ENCODE measurements at regions of chr7 and their contacts with region 1.

Region 1: GRCh38 chr7:47266131-47266706 is 315.7 kb downstream of the TNS3 start:
- DNase-seq: peak; percentile 78
- H3K4me3 Mint-ChIP-seq: no peak overlapping the region
- H3K27ac Mint-ChIP-seq: no peak overlapping the region
- H3K4me1 Mint-ChIP-seq: no peaks in the 10 kb centered on the region
- H3K27me3 Mint-ChIP-seq: no peaks in the 10 kb centered on the region

Region 2: DNA sequence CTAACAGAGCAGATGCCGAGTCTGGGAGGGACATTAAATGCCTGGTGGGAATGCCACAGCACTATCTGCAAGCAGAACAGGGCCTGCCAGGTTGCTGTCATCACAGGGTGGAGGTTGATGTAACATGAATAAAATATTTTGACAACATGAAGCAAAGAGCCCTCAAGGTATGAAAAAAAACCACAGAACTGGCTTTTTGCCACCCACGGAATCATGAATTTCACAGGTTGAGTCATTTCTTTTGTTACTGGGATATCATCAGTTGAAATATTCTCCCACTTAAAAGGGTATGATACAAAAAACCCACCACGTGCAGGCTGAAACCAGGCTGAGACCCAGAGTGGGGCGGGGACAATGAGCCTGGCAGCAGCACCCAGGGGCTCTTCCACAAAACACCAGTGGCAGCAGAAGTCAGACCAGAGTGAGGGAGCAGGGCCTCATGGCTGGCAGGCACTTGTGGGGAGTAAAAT is 95.6 kb after region 1 on chr7:
- intact Hi-C with region 1: loop called (anchors 5 kb)
- DNase-seq: peak; percentile 54
- H3K4me3 Mint-ChIP-seq: no peak overlapping the region
- H3K27ac Mint-ChIP-seq: peak overlapping the region; percentile 61
- H3K4me1 Mint-ChIP-seq: peaks cover 6% of the 10 kb centered on the region
- H3K27me3 Mint-ChIP-seq: no peaks in the 10 kb centered on the region

Region 3: DNA sequence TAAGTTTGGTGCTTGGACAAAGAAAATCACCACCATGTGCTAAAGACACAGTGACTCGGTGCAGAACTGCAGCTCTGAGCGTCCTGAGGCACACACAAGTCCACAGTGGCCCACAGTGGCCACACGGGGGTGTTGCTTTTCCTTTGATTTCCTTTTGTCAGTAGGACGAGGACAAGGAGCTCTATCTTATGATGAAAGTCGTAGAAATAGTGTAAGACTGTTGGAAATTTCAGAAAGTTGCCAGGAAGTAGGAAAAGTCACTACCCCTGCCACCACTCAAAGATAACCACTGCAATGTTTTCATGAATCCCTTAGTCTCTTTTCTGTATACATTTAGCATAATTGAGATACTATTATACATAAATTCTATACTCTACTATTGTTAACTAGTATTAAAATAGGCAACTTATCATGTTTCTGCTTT is 169.7 kb after region 1 on chr7:
- intact Hi-C with region 1: loop called (anchors 10 kb)
- DNase-seq: no peak
- H3K4me3 Mint-ChIP-seq: no peak overlapping the region
- H3K27ac Mint-ChIP-seq: no peak overlapping the region
- H3K4me1 Mint-ChIP-seq: peaks cover 2% of the 10 kb centered on the region
- H3K27me3 Mint-ChIP-seq: no peaks in the 10 kb centered on the region

Region 4: DNA sequence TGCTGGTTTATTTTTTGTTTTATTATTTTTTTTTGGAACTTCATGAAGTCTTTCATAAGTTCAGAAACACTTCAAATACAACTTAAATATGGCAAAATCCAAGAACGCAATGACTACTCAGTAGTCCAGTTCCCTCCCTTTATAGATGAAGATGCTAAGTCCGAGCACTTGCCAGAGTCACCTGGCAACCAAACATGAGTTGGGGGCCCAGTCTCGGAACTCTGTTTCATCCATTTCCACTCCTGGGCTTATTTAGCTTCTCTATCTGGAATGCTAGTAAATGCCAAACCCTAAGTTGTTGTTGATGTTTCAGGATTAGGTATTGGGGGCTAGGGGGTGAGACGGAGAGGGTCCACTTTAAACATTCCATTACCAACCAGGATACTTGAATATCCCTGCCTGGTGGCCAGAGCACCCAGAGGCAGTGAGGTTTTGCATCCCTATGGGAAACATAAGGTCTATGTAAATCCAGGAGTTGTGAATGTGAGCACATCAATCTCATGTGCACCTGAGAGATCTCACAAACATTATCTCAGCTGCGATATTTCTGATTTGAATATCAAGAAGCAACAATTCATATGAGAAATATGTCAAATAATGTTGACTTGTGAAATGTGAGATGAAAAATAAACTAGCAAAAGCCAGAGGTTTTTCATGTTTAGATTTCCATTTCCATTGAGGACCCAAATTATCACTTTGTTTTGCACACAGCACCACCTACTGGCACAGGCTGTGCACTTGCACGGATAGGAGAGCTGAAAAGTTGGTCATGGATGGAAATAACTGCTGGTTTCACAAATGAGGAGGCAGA is 552.8 kb after region 1 on chr7:
- intact Hi-C with region 1: loop called (anchors 1 kb)
- DNase-seq: peak; percentile 84
- H3K4me3 Mint-ChIP-seq: no peak overlapping the region
- H3K27ac Mint-ChIP-seq: no peak overlapping the region
- H3K4me1 Mint-ChIP-seq: no peaks in the 10 kb centered on the region
- H3K27me3 Mint-ChIP-seq: no peaks in the 10 kb centered on the region

Measured in activated CD4-positive, alpha-beta T cell treated with anti-CD3 and anti-CD28 coated beads, Interleukin-2, amount 10 ng/mL, durations not matched to agents 24 days and 14 days (primary cell).